Activated CD4-positive, alpha-beta T cell treated with anti-CD3 and anti-CD28 coated beads, Interleukin-2, amount 10 ng/mL, durations not matched to agents 24 days and 14 days (primary cell): ENCODE measurements at regions of chr1 and their contacts with region 1.

Region 1: DNA sequence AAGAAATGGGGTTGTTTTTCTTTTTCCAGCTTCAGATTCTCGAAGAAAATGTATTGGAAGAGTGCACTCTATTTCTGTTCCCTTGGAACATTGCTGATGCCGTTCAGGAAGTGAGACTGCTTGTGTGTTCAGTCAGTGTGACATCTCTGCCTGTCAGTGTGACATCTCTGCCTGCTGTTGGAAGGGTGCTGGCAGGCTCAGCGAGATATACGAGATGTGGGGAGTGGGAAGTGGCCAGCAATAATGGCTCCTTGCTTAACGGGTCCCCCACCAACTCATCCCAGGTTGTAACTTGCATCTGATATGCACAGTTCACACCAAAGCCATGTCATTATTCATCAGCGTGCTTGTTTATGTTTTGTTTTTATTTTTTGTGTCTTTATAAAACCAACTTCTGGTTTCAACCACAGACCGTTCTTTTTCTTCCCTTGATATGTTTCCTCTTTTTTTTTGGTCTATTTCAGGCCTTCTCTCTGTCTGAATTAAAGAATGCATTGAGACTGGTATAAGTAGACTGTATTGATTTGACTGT is 145.4 kb downstream of the GALNT2 start:
- DNase-seq: peak; percentile 73
- H3K4me3 Mint-ChIP-seq: peak overlapping the region; percentile 52
- H3K27ac Mint-ChIP-seq: peak overlapping the region; percentile 91
- H3K4me1 Mint-ChIP-seq: peaks cover 67% of the 10 kb centered on the region
- H3K27me3 Mint-ChIP-seq: no peaks in the 10 kb centered on the region

Region 2: GRCh38 chr1:230127105-230128054 is 85.1 kb before region 1 on chr1:
- intact Hi-C with region 1: loop called (anchors 2 kb)
- DNase-seq: peak; percentile 88
- H3K4me3 Mint-ChIP-seq: peak overlapping the region; percentile 76
- H3K27ac Mint-ChIP-seq: peak overlapping the region; percentile 81
- H3K4me1 Mint-ChIP-seq: peaks cover 70% of the 10 kb centered on the region
- H3K27me3 Mint-ChIP-seq: no peaks in the 10 kb centered on the region

Region 3: GRCh38 chr1:230231774-230232145 is 19.3 kb after region 1 on chr1:
- intact Hi-C with region 1: no loop called
- DNase-seq: no peak
- H3K4me3 Mint-ChIP-seq: no peak overlapping the region
- H3K27ac Mint-ChIP-seq: peak overlapping the region; percentile 81
- H3K4me1 Mint-ChIP-seq: peaks cover 11% of the 10 kb centered on the region
- H3K27me3 Mint-ChIP-seq: no peaks in the 10 kb centered on the region

Region 4: DNA sequence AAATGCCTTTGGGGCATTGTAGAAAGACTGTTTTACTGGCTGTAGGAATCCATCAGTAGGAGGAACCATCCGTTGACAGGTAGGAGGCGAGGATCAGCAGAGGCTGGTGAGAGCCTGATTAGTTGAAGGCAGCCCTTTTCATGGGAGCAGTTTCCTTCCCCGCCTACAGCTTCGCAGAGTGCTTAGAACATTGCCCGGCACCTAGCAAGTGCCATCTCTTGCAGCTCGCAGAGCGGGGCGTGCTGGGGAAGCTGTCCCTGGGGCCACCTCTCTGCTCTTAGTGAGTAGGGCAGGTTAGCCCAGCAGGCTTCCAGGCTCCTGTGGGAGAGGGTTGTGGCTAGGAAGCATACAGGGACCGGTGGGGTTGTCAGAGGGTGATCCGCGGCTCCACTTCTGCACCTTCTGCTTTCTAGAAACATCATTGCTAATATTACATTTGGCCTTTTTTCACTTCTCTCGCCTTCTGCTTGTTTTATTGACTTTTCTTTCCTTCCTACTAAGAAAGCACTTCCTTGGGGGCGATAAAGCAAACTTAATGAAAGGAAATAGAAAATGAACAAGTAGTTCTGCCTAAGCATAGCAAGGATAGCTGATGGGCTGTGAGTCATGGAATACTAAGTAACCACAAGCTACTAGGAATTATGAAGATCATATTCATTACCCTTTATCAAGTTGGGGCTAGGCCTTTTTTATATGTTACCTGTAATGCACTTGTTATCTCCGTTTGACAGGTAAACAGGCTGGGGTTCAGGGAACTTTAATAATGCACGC is 31.3 kb after region 1 on chr1:
- intact Hi-C with region 1: loop called (anchors 1 kb)
- DNase-seq: no peak
- H3K4me3 Mint-ChIP-seq: no peak overlapping the region
- H3K27ac Mint-ChIP-seq: peak overlapping the region; percentile 68
- H3K4me1 Mint-ChIP-seq: peaks cover 40% of the 10 kb centered on the region
- H3K27me3 Mint-ChIP-seq: no peaks in the 10 kb centered on the region

Region 5: DNA sequence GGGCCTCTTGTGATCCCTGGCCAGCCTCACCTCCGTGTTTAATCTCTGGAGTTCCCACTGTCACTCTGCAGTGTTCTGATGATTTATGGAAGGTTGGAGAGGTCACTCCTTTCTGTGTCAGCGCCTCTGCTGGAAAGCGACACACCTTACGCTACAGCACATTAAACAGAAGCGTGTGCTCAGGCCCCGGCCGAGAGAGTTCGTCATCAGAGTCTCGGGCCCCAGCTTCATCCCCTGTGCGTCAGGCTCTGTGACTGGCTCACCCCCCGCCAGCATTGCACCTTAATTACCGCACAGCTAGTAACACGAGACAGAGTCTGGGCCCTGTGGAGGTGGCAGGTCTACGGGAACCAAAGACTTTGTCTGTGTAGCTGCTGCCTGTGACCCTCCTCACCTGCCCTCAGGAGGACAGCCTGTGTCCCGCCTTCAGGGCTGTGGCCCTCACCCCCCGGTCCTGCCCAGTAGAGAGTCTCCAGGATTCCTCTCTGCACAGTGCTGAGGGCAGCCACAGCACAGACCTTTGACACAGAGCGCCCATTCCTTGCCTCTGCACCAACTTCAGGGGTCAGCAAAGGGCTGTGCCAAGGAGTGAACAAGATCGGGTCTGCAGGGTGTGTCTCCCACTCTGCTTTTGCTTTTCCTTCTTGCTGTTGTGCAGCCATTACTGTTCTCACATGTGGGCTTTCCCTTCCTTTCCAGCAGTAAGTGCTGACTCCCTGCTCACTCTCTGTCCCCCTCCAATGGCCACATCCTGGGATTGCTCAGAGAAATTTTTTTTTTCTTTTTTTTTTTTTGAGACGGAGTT is 56.1 kb after region 1 on chr1:
- intact Hi-C with region 1: loop called (anchors 1 kb)
- DNase-seq: peak; percentile 65
- H3K4me3 Mint-ChIP-seq: no peak overlapping the region
- H3K27ac Mint-ChIP-seq: peak overlapping the region; percentile 81
- H3K4me1 Mint-ChIP-seq: peaks cover 29% of the 10 kb centered on the region
- H3K27me3 Mint-ChIP-seq: no peaks in the 10 kb centered on the region

Region 6: DNA sequence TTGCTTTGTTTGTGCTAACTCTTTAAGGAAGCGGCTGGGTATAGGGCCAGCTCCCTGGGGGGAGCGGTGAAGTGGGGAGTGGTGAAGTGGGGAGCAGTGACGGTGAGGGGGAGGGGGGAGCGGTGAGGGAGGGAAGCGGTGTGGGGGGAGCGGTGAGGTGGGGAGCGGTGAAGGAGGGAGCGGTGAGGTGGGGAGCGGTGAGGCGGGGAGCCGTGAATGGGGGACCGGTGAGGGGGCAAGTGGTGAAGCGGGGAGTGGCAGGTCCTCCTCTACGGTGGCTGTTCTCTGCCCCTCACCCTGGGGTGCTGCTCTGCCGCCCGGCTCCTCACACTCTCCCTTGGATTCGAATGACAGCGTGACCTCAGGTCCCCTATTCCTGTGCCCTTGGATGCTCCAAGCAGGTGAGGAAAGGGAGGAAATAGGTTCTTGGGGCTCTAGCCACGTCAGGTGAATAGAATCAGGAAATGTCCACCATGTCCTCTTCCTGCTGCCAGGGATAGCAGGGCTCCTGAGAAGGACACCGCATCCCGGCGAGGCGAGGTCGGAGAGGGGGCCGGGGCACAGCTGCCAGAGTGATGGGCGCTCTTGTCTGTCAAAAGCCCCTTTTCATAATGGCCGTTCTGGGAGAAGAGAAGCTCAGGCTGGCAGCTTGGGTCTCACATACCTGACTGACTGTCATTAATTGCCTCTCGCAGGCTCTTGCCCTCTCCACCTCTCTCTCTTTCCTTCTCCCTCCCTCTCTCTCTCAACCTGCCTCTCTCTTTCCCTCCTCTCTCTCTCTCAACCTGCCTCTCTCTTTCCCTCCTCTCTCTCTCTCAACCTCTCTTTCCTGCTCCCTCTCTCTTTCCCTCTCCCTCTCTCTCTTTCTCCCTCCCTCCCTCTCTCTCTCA is 79.5 kb after region 1 on chr1:
- intact Hi-C with region 1: no loop called
- DNase-seq: no peak
- H3K4me3 Mint-ChIP-seq: no peak overlapping the region
- H3K27ac Mint-ChIP-seq: no peak overlapping the region
- H3K4me1 Mint-ChIP-seq: peaks cover 3% of the 10 kb centered on the region
- H3K27me3 Mint-ChIP-seq: peaks cover 31% of the 10 kb centered on the region

Region 7: DNA sequence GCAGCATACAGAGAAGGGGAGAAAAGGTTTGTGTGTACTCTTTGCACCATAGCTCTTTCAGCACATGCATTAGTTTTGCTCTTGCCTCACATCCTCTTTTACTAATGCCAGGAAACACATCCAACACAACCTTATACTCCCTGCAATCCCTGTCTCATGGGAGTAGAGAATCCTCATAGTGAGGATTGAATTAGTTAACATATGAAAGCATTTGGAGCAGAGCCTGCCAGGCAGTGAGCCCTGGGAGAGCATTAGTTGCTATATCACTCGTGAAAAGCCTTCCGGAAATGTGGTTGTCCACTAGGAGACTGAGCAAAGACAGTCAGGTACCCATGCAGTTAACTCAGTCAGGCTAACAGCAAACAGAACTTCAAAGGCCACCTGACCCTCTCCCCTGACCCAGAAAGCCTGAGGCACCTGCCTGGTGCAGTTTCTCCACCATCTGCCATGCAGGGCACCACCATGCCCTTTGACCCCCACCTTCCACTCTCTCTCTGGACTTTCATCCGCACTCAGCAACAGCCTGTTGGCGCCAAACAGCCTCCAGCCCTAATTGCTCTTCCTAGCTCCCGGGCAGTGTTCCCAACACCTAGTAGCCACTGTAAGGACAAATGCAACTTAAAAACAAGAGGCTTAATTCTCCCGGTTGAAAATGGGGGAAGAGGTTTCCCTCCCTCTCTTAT is 516.4 kb after region 1 on chr1:
- intact Hi-C with region 1: no loop called
- DNase-seq: no peak
- H3K4me3 Mint-ChIP-seq: no peak overlapping the region
- H3K27ac Mint-ChIP-seq: no peak overlapping the region
- H3K4me1 Mint-ChIP-seq: no peaks in the 10 kb centered on the region
- H3K27me3 Mint-ChIP-seq: no peaks in the 10 kb centered on the region